ENCODE measurements at regions of chr11 and their contacts with region 1.

Region 1: DNA sequence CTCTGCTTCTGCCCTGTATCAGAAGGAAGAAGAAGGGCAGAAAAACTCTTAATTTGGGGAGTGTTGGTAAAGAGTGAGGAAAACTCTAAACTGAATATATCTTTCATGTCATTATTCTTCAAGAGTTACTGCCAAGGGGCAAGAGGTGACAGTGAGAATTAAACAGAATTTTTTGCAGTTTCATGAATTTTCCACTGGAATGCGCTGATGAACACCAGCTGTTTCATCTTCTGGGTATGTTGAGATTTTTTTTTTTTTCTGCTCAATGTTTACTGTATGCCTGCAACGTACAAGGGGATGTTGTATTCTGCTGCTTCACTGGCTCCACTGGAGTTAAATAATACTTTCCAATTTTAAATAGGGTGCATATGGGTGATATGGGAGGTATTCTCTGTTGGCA is 117.8 kb downstream of the FAM76B start:
- DNase-seq: no peak
- ATAC-seq: no peak
- H3K4me3 ChIP-seq: no peak overlapping the region
- H3K4me3 Mint-ChIP-seq: no peak overlapping the region
- H3K27ac ChIP-seq: no peak overlapping the region
- H3K27ac Mint-ChIP-seq: peak overlapping the region; percentile 20 to 41
- H3K4me1 ChIP-seq: no peaks in the 10 kb centered on the region
- H3K4me1 Mint-ChIP-seq: peaks cover 24 to 33% (median 32%) of the 10 kb centered on the region in 3 donors
- H3K27me3 ChIP-seq: no peaks in the 10 kb centered on the region
- H3K27me3 Mint-ChIP-seq: no peaks in the 10 kb centered on the region

Region 2: DNA sequence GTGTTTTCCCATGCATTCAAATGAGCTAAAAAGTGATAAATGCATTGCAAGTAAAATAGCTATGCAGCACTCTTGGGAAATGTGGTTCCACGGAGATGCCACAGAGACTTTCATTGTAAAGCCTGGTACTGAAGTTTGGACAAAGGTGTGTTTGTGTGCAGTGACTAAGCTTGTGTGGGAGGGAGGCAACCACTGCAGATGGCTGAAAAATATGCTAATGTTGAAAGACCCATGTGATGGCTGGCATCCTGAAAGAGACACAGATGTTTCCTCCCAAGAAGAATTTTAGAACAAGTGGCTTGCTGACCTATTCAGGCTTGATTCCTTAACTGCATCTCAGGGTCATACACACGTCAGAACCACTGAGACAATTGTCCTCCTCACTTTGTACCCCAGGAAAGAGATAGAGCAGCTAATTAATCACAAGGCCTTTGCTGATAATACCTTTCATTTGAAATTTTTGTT is 44.0 kb after region 1 on chr11:
- CTCF ChIA-PET with region 1: no interaction called
- POLR2A ChIA-PET with region 1: no interaction called
- DNase-seq: peak in 1 of 35 experiments; percentile 33
- ATAC-seq: peak; percentile 64 to 87 (median 82)
- H3K4me3 ChIP-seq: no peak overlapping the region
- H3K4me3 Mint-ChIP-seq: no peak overlapping the region
- H3K27ac ChIP-seq: peak overlapping the region; percentile 19
- H3K27ac Mint-ChIP-seq: peak overlapping the region; percentile 80 to 84
- H3K4me1 ChIP-seq: peaks cover 3 to 6% of the 10 kb centered on the region in 2 experiments
- H3K4me1 Mint-ChIP-seq: peaks cover 23 to 59% (median 43%) of the 10 kb centered on the region in 3 donors
- H3K27me3 ChIP-seq: no peaks in the 10 kb centered on the region
- H3K27me3 Mint-ChIP-seq: peaks cover 1 to 8% of the 10 kb centered on the region in 2 donors

Region 3: GRCh38 chr11:95816037-95816436 is 144.3 kb after region 1 on chr11:
- CTCF ChIA-PET with region 1: no interaction called
- POLR2A ChIA-PET with region 1: no interaction called
- DNase-seq: no peak
- ATAC-seq: no peak
- H3K4me3 ChIP-seq: no peak overlapping the region
- H3K4me3 Mint-ChIP-seq: no peak overlapping the region
- H3K27ac ChIP-seq: no peak overlapping the region
- H3K27ac Mint-ChIP-seq: no peak overlapping the region
- H3K4me1 ChIP-seq: no peaks in the 10 kb centered on the region
- H3K4me1 Mint-ChIP-seq: no peaks in the 10 kb centered on the region
- H3K27me3 ChIP-seq: no peaks in the 10 kb centered on the region
- H3K27me3 Mint-ChIP-seq: no peaks in the 10 kb centered on the region

Region 4: DNA sequence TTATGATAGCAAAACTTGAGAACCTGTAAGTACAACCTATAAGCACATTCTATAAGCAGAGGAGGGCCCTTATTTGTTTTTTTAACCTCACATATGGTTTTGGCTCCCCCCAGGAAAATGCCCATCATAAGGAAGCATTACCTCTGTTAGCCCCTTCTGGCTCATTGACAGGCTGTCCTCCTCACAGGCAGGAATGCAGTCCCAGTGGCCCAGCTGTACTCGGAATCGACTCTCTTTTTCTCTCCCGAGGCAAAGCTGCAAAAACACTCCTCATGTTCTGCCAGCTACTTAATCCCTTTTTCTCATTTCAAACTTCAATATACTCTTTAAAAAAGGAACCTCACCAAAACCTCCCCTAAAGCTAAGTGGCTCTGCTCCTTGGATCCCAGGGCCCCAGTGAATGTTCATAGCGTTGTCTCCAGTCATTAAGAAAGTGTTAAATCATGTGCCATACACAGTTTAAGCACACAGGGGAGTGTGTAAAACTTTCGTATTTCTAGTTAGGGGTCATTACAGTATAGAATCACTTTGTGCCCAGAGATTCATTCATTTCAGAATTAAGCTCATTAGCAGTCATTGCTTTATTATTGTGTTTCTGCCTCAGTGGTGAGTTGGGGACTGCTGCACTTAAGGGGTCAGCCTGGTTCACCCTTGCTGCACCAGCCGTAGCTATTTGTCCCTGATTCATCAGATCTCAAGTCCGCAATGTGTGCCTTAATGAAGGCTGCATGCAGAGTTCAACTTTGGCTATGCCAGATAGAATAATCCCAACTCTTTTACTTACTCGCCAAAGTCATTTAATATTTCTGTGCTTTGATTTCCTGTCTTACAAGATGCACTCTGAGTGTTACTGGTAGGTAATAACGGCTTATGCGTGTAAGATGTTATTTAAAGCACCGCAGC is 775.7 kb after region 1 on chr11:
- CTCF ChIA-PET with region 1: no interaction called
- POLR2A ChIA-PET with region 1: interaction called in 1 of 2 experiments, 10 read pairs
- DNase-seq: no peak
- ATAC-seq: no peak
- H3K4me3 ChIP-seq: no peak overlapping the region
- H3K4me3 Mint-ChIP-seq: no peak overlapping the region
- H3K27ac ChIP-seq: no peak overlapping the region
- H3K27ac Mint-ChIP-seq: no peak overlapping the region
- H3K4me1 ChIP-seq: no peaks in the 10 kb centered on the region
- H3K4me1 Mint-ChIP-seq: no peaks in the 10 kb centered on the region
- H3K27me3 ChIP-seq: peaks cover 2% of the 10 kb centered on the region in 2 experiments
- H3K27me3 Mint-ChIP-seq: peaks cover 16 to 20% of the 10 kb centered on the region in 2 donors

Measured in T-cell (primary cell).